Transverse colon (tissue), 4 donors: ENCODE measurements at regions of chr4 and their contacts with region 1.

Region 1: GRCh38 chr4:85928775-85929591 is 430.9 kb downstream of the MAPK10 start:
- DNase-seq: no peak
- H3K4me3 ChIP-seq: peak overlapping the region in 1 of 4 donors; percentile 3
- H3K27ac ChIP-seq: peak overlapping the region; percentile 61 to 71 (median 65)
- H3K4me1 ChIP-seq: peaks cover 7 to 42% (median 19%) of the 10 kb centered on the region in 4 donors
- H3K27me3 ChIP-seq: no peaks in the 10 kb centered on the region
- CTCF ChIP-seq: no peak
- EP300 ChIP-seq: no peak
- POLR2A ChIP-seq: no peak

Region 2: GRCh38 chr4:85939595-85939994 is 10.6 kb after region 1 on chr4:
- in situ Hi-C with region 1: no loop called
- intact Hi-C with region 1: no loop called
- DNase-seq: no peak
- H3K4me3 ChIP-seq: no peak overlapping the region
- H3K27ac ChIP-seq: no peak overlapping the region
- H3K4me1 ChIP-seq: peaks cover 0 to 16% (median 11%) of the 10 kb centered on the region in 4 donors
- H3K27me3 ChIP-seq: no peaks in the 10 kb centered on the region
- CTCF ChIP-seq: no peak
- EP300 ChIP-seq: no peak
- POLR2A ChIP-seq: no peak

Region 3: GRCh38 chr4:86155766-86156165 is 226.8 kb after region 1 on chr4:
- in situ Hi-C with region 1: no loop called
- intact Hi-C with region 1: loop called (anchors 10 kb)
- DNase-seq: no peak
- H3K4me3 ChIP-seq: no peak overlapping the region
- H3K27ac ChIP-seq: no peak overlapping the region
- H3K4me1 ChIP-seq: no peaks in the 10 kb centered on the region
- H3K27me3 ChIP-seq: no peaks in the 10 kb centered on the region
- CTCF ChIP-seq: no peak
- EP300 ChIP-seq: no peak
- POLR2A ChIP-seq: no peak